ENCODE measurements at regions of chr5 and their contacts with region 1.

Region 1: GRCh38 chr5:168705319-168705718 is 126.2 kb upstream of the PANK3 start:
- DNase-seq: no peak

Region 2: DNA sequence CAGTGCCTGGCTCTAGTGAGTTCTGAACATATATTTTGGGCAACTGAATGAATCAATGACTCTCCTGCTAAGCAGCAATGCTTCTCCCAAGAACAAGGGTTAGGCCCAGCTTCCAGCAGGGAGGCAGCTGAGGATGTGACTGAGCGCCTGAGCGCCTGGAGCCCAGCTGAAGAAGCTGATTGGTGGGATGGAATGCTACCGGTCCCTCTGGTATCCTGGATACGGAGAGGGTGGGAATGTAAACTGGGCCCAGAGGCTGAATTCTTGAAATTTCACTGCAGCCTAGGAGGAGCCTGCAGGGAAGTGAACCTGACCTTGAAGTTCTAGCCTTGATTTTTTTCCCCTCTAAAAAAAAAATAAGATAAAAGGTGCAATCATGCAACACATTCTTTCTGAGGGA is 370.6 kb before region 1 on chr5:
- CTCF ChIA-PET with region 1: no interaction called
- POLR2A ChIA-PET with region 1: no interaction called
- DNase-seq: no peak

Region 3: DNA sequence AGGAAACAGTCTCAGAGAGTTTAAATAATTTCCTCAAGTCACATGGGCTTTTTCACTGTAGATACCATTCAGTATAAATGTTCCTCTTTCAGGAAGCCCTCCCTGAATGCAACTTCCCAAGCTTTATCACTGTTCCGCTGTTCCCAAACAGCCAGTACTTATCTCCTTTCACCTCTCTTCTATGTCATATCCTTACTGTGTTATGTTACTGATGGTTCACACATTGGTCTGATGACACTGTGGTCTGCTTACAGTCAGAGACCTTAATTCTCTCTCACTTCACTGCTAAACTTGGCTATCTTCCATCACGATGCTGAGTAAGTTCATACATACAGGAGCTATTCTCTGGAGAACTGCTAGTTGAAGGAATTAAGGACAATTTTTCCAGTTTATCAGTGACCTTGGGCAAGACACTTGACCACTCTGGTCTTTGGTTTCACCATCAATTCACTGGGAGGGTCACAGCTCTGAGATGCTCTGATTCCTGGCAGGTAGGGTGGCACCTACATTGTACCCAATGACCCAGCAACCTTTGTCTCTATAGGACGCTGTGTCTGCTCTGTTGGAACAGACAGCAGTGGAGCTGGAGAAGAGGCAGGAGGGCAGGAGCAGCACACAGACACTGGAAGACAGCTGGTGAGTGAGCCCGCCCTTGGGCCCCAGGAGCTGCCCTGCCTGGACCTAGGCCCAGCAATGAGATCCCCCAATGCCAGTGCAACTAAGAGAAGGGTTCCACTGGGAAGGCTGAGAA is 261.2 kb before region 1 on chr5:
- CTCF ChIA-PET with region 1: no interaction called
- POLR2A ChIA-PET with region 1: no interaction called
- DNase-seq: no peak

Region 4: DNA sequence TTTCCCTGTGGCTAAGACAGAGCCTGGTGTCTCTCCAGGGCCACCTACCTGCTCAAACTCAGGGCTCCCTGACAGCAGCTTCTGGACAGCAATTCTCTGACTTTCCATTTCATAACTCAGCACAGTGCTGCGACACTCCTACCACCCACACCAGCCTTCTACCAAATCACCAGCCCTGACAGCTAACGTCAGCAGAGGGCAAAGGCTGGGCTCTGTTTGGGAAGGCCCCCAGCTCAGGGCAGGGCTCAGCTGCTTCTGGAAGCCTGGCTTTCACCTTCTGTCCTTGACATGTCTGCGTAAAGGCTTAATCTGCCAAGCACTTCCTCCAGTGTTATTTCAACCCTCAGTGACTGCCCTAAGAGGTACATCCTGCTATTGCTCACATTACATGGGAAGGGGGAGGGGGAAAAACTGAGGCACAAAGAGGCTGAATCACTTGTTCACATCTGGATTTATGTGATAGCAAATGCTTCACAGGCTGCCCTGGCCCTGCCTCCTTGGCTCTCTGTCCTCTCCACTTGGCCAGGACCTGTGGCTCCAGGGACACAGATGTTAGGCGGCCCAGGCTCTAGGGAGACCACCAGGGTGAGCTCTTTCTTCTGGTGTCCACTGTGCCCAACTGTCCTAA is 23.6 kb before region 1 on chr5:
- CTCF ChIA-PET with region 1: no interaction called
- POLR2A ChIA-PET with region 1: no interaction called
- DNase-seq: no peak

Region 5: GRCh38 chr5:168987543-168988300 is 282.4 kb after region 1 on chr5:
- CTCF ChIA-PET with region 1: interaction called, 10 read pairs
- POLR2A ChIA-PET with region 1: no interaction called
- DNase-seq: peak; percentile 76